Activated naive CD4-positive, alpha-beta T cell treated with anti-CD3 and anti-CD28 coated beads, Interleukin-2, amount 10 ng/mL, durations not matched to agents 7 days and 5 days (primary cell): ENCODE measurements at regions of chr17 and their contacts with region 1.

Region 1: GRCh38 chr17:35119368-35120165 is at the start of gene RAD51D:
- DNase-seq: peak; percentile 85
- H3K4me3 Mint-ChIP-seq: peak within 1 kb of the TSS; percentile 90
- H3K27ac Mint-ChIP-seq: peak within 1 kb of the TSS; percentile 91
- H3K4me1 Mint-ChIP-seq: peaks cover 37% of the 10 kb centered on the region
- H3K27me3 Mint-ChIP-seq: peaks cover 9% of the 10 kb centered on the region

Region 2: DNA sequence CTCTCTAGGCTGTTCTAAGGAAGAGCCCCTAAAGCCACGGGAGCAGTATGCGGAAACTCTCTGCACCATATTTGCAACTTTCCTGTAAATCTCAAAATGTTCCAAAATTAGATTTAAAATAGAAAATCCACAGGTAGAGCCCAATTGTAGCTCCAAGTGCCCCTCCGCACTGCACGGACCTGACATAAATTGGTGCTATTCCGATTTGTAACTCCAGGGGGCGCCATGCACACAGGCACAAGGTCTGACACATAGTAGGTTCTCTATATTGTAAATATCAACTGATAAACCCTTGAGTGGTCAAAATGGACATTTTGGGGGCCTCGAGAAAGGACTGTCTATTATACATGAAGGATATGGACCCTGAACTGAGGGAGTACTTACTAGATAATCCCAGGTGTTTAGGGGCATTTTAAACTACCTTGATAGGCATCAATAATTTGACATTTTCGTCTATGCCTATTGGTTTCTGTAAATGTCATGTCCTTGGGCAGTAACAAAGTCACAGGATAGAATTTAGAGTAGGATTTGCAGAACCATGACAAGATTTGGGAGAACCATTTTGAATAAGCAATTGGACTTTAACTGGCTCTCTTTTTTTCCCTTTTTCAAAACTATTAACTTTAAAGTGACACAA is 576.7 kb before region 1 on chr17:
- CTCF ChIA-PET with region 1: interaction called, 13 read pairs
- DNase-seq: peak; percentile 64
- H3K4me3 Mint-ChIP-seq: no peak overlapping the region
- H3K27ac Mint-ChIP-seq: no peak overlapping the region
- H3K4me1 Mint-ChIP-seq: no peaks in the 10 kb centered on the region
- H3K27me3 Mint-ChIP-seq: peaks cover 39% of the 10 kb centered on the region

Region 3: DNA sequence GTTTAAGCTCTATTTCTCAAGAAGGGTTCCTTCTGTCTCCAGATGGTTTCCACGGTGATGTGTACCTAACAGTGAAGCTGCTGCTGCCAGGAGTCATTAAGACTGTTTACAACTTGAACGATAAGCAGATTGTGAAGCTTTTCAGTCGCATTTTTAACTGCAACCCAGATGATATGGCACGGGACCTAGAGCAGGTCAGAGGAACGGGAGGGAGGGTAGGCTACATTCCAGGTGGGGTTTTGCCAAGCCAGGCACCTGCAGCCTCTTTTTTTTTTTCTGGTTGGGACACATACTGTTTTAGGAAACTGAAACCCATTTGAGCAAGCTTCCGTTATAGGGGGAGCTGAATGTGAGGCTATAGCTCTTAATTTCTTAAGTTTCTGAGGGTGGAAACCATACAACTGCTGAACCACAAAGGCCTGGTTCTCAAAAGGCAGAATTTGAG is 128.6 kb before region 1 on chr17:
- CTCF ChIA-PET with region 1: interaction called, 114 read pairs
- DNase-seq: no peak
- H3K4me3 Mint-ChIP-seq: no peak overlapping the region
- H3K27ac Mint-ChIP-seq: no peak overlapping the region
- H3K4me1 Mint-ChIP-seq: peaks cover 9% of the 10 kb centered on the region
- H3K27me3 Mint-ChIP-seq: no peaks in the 10 kb centered on the region

Region 4: DNA sequence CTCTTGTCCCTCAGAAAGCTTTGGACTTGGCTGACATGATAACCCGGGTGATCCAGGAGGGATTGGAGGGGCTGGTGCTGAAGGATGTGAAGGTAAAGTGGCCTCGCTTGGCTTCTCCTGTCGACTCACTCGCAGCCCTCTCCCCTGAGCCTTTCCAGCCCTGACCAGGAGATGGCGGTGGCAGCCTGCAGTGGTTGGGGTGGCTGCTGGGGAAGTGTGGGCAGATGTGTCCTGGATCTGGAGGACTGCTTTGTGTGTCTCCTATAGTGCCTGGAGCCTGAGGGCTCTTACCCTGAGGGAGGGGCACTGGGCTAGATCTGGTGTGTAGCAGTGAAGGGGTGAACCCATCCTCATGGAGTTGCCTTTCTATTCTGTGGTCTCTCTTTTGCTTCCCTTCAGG is 121.4 kb before region 1 on chr17:
- CTCF ChIA-PET with region 1: interaction called, 114 read pairs
- DNase-seq: peak; percentile 88
- H3K4me3 Mint-ChIP-seq: no peak overlapping the region
- H3K27ac Mint-ChIP-seq: peak overlapping the region; percentile 33
- H3K4me1 Mint-ChIP-seq: peaks cover 5% of the 10 kb centered on the region
- H3K27me3 Mint-ChIP-seq: no peaks in the 10 kb centered on the region